Activated CD4-positive, alpha-beta memory T cell treated with anti-CD3 and anti-CD28 coated beads, Interleukin-2, amount 10 ng/mL, durations not matched to agents 7 days and 5 days (primary cell): ENCODE measurements at regions of chr17 and their contacts with region 1.

Region 1: GRCh38 chr17:412211-413015 is 59.8 kb upstream of the RPH3AL start:
- DNase-seq: peak; percentile 76
- H3K4me3 Mint-ChIP-seq: peak overlapping the region; percentile 80
- H3K27ac Mint-ChIP-seq: peak overlapping the region; percentile 85
- H3K4me1 Mint-ChIP-seq: peaks cover 79% of the 10 kb centered on the region
- H3K27me3 Mint-ChIP-seq: peaks cover 3% of the 10 kb centered on the region

Region 2: DNA sequence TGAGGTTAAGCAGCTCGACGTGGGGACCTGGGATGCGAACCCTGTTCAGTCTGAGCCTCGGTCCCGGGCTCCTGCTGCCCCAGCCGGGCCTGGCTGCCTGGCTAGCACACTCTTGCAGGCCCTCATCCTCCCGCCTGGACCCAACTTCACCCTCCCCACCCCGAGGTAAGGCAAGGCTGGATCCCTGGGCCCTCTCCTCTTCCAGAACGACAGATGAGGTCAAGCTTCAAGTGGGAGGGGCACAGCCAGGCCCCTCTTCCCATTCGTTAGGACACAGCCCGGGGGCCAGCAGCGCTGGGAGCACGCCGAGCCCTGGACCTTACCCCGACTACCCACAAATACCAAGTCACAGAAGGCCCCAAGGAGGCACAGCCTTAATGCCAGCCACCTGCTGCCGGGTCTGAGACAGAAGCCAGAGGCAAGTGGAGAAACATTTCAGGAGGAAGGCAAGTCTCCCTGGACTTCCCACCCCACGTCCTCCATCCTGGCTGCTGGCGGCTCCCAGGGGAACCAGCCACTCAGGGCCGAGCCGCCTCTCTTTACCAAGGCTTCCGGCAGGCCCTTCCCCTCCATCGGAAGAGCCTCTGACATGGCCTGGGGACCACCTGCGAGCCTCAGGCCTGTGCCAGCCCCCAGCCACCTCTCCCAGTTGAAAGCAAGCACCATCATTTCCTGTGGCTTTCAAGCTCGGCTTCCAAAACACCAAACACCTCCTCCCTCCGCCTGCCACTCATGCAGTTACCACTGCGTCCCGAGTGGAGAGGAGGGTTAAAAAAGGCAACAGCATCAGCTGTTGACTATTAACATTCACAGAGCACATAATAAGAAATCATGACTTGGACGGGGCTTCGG is 119.7 kb before region 1 on chr17:
- CTCF ChIA-PET with region 1: no interaction called
- POLR2A ChIA-PET with region 1: no interaction called
- DNase-seq: no peak
- H3K4me3 Mint-ChIP-seq: no peak overlapping the region
- H3K27ac Mint-ChIP-seq: no peak overlapping the region
- H3K4me1 Mint-ChIP-seq: peaks cover 2% of the 10 kb centered on the region
- H3K27me3 Mint-ChIP-seq: no peaks in the 10 kb centered on the region

Region 3: DNA sequence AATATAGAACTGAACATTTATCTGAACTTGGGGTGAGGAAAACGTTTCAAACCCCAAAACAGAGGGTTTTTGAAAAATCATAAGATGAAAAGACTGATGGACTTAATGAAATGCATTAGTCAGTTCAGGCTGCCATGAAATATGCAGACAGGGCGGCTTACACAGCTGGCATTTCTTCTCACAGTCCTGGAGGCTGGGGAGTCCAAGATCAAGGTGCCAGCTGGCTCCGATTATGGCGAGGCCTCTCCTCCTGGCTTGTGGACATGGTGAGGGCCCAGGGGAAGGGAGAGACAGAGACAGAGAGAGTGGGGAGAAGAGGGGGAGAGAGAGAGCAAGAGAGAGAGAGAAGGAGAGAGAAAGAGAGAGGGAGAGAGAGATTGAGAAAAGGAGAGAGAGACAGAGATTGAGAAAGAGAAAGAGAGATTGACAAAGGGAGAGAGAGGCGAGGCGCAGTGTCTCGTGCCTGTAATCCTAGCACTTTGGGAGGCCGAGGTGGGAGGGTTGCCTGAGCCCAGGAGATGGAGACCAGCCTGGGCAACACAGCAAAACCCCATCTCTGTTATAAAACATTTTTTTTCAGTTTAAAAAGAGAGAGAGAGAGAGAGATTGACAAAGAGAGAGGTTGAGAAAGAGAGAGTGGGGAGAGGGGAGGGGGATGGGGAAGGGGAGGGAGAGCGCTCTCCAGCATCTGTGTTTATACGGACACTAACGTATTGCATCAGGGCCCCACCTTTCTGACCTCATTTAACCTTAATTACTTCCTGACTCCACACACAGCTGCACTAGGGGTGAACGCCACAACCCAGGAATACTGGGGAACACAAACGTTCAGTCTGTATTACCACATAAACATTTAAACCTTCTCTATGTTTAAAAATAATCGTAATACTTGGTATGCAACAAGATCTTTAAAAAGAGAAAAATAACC is 35.2 kb before region 1 on chr17:
- CTCF ChIA-PET with region 1: no interaction called
- POLR2A ChIA-PET with region 1: no interaction called
- DNase-seq: no peak
- H3K4me3 Mint-ChIP-seq: no peak overlapping the region
- H3K27ac Mint-ChIP-seq: no peak overlapping the region
- H3K4me1 Mint-ChIP-seq: peaks cover 3% of the 10 kb centered on the region
- H3K27me3 Mint-ChIP-seq: peaks cover 1% of the 10 kb centered on the region

Region 4: GRCh38 chr17:491086-492021 is 78.9 kb after region 1 on chr17:
- CTCF ChIA-PET with region 1: interaction called, 6 read pairs
- POLR2A ChIA-PET with region 1: interaction called, 45 read pairs
- DNase-seq: peak; percentile 39
- H3K4me3 Mint-ChIP-seq: peak overlapping the region; percentile 56
- H3K27ac Mint-ChIP-seq: peak overlapping the region; percentile 65
- H3K4me1 Mint-ChIP-seq: peaks cover 7% of the 10 kb centered on the region
- H3K27me3 Mint-ChIP-seq: peaks cover 15% of the 10 kb centered on the region

Region 5: GRCh38 chr17:700504-701094 is 288.2 kb after region 1 on chr17:
- CTCF ChIA-PET with region 1: interaction called, 174 read pairs
- POLR2A ChIA-PET with region 1: interaction called, 13 read pairs
- DNase-seq: no peak
- H3K4me3 Mint-ChIP-seq: no peak overlapping the region
- H3K27ac Mint-ChIP-seq: no peak overlapping the region
- H3K4me1 Mint-ChIP-seq: no peaks in the 10 kb centered on the region
- H3K27me3 Mint-ChIP-seq: no peaks in the 10 kb centered on the region

Region 6: GRCh38 chr17:740240-741017 is 328.0 kb after region 1 on chr17:
- CTCF ChIA-PET with region 1: no interaction called
- POLR2A ChIA-PET with region 1: no interaction called
- DNase-seq: peak; percentile 26
- H3K4me3 Mint-ChIP-seq: no peak overlapping the region
- H3K27ac Mint-ChIP-seq: peak overlapping the region; percentile 58
- H3K4me1 Mint-ChIP-seq: peaks cover 6% of the 10 kb centered on the region
- H3K27me3 Mint-ChIP-seq: no peaks in the 10 kb centered on the region

Region 7: DNA sequence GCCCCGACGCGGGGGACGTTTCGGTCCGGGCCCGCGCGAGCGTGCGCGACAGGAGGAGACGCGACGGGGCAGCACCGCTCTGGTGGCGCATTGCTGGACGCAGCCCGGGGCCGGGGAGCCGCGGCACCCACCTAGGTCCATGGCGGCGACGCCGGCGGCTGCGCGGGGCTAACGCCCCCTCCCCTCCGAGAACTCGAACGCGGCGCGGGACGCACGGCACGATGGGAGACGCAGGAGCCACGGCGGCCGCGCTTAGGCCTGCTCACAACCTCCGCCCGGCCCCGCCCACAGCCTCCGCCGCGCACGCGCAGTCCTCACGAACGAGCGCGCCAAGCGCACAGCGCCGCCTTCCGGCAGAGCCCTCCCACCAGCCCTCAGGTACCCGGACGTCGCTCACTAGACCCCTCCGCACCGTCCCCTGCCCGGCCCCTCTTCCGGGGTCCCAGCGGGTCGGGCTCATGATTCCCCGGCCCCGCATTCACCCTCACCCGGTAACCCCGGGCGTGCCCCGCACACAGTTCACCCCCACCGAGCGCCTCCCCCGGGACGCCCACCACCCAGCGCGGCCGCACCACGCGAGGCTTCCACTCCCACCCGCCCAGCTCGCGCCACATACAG is 339.7 kb after region 1 on chr17 and contains the start of gene GEMIN4:
- CTCF ChIA-PET with region 1: interaction called, 13 read pairs
- POLR2A ChIA-PET with region 1: interaction called, 3 read pairs
- DNase-seq: peak; percentile 97
- H3K4me3 Mint-ChIP-seq: peak within 1 kb of the TSS; percentile 86
- H3K27ac Mint-ChIP-seq: peak within 1 kb of the TSS; percentile 89
- H3K4me1 Mint-ChIP-seq: peaks cover 34% of the 10 kb centered on the region
- H3K27me3 Mint-ChIP-seq: no peaks in the 10 kb centered on the region
- total RNA-seq, gene GEMIN4: 23.1 to 25.6 TPM

Region 8: GRCh38 chr17:996554-997344 is 584.3 kb after region 1 on chr17 and contains the start of gene TIMM22:
- CTCF ChIA-PET with region 1: interaction called, 10 read pairs
- POLR2A ChIA-PET with region 1: interaction called, 3 read pairs
- DNase-seq: peak; percentile 94
- H3K4me3 Mint-ChIP-seq: peak within 1 kb of the TSS; percentile 91
- H3K27ac Mint-ChIP-seq: peak within 1 kb of the TSS; percentile 83
- H3K4me1 Mint-ChIP-seq: peaks cover 25% of the 10 kb centered on the region
- H3K27me3 Mint-ChIP-seq: no peaks in the 10 kb centered on the region
- total RNA-seq, gene TIMM22: 8.1 to 8.2 TPM